GM12878 (cell line): ENCODE measurements at regions of chrX and their contacts with region 1.

Region 1: GRCh38 chrX:113001836-113002235 is 161.2 kb upstream of the AMOT start:
- DNase-seq: no peak
- ATAC-seq: no peak
- H3K4me3 ChIP-seq: no peak overlapping the region
- H3K27ac ChIP-seq: no peak overlapping the region
- H3K4me1 ChIP-seq: no peaks in the 10 kb centered on the region
- H3K27me3 ChIP-seq: no peaks in the 10 kb centered on the region
- CTCF ChIP-seq: peak in 1 of 3 experiments; percentile 18; a peak in 1 of 6 replicates
- EP300 ChIP-seq: no peak
- POLR2A ChIP-seq: no peak
- RAD21 ChIP-seq: peak; percentile 37; the same call in 1 of the 2 replicates

Region 2: GRCh38 chrX:112704187-112704586 is 297.6 kb before region 1 on chrX:
- CTCF ChIA-PET with region 1: no interaction called
- POLR2A ChIA-PET with region 1: no interaction called
- RAD21 ChIA-PET with region 1: no interaction called
- SMC1A ChIA-PET with region 1: no interaction called
- in situ Hi-C with region 1: no loop called
- intact Hi-C with region 1: no loop called
- DNase-seq: no peak
- ATAC-seq: no peak
- H3K4me3 ChIP-seq: no peak overlapping the region
- H3K27ac ChIP-seq: no peak overlapping the region
- H3K4me1 ChIP-seq: no peaks in the 10 kb centered on the region
- H3K27me3 ChIP-seq: no peaks in the 10 kb centered on the region
- CTCF ChIP-seq: no peak
- EP300 ChIP-seq: no peak
- POLR2A ChIP-seq: no peak
- RAD21 ChIP-seq: no peak

Region 3: GRCh38 chrX:112774651-112775293 is 227.1 kb before region 1 on chrX:
- CTCF ChIA-PET with region 1: no interaction called
- POLR2A ChIA-PET with region 1: no interaction called
- RAD21 ChIA-PET with region 1: no interaction called
- SMC1A ChIA-PET with region 1: no interaction called
- in situ Hi-C with region 1: no loop called
- intact Hi-C with region 1: loop called (anchors 10 kb)
- DNase-seq: no peak
- ATAC-seq: no peak
- H3K4me3 ChIP-seq: no peak overlapping the region
- H3K27ac ChIP-seq: no peak overlapping the region
- H3K4me1 ChIP-seq: no peaks in the 10 kb centered on the region
- H3K27me3 ChIP-seq: no peaks in the 10 kb centered on the region
- CTCF ChIP-seq: no peak
- EP300 ChIP-seq: no peak
- POLR2A ChIP-seq: no peak
- RAD21 ChIP-seq: no peak

Region 4: DNA sequence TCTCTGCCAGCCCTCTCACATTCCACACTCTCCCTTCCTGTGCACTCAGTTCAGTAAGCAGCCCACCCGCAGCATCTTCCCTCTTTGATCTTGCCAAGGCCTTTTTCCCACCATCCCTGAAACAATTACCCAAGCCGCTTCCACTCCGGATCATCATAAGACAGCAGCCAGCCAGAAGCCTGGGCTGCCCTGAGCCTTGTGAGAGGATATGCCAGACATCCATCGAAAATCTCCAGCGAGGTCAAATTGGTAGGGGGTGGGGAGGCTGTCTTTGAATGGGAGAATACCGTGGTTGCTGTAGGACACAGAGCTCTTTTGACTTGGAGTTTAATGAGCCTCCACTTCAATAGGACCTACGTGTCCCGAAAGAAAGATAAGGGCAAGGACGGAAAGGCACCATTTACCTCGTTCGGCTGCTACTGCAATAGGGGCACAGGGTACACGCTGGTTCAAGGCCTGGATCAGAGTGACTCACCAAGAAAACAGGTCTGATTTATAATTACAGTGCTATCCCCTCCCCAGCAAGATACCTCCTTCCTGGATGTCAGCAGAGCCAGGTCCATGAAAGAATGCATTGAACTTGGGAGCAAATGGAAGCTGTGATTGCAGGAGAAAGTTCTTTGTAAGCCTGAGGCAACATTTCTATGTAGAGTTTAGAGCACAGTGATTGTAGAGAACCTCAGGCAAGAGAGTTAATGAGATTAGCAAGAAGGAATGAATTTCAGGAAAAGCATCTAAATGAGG is 200.7 kb before region 1 on chrX:
- CTCF ChIA-PET with region 1: no interaction called
- POLR2A ChIA-PET with region 1: no interaction called
- RAD21 ChIA-PET with region 1: no interaction called
- SMC1A ChIA-PET with region 1: no interaction called
- in situ Hi-C with region 1: no loop called
- intact Hi-C with region 1: no loop called
- DNase-seq: no peak
- ATAC-seq: no peak
- H3K4me3 ChIP-seq: no peak overlapping the region
- H3K27ac ChIP-seq: no peak overlapping the region
- H3K4me1 ChIP-seq: no peaks in the 10 kb centered on the region
- H3K27me3 ChIP-seq: no peaks in the 10 kb centered on the region
- CTCF ChIP-seq: no peak
- EP300 ChIP-seq: no peak
- POLR2A ChIP-seq: no peak
- RAD21 ChIP-seq: no peak

Region 5: GRCh38 chrX:113019958-113020357 is 18.1 kb after region 1 on chrX:
- CTCF ChIA-PET with region 1: no interaction called
- POLR2A ChIA-PET with region 1: no interaction called
- RAD21 ChIA-PET with region 1: no interaction called
- SMC1A ChIA-PET with region 1: no interaction called
- in situ Hi-C with region 1: no loop called
- intact Hi-C with region 1: no loop called
- DNase-seq: no peak
- ATAC-seq: no peak
- H3K4me3 ChIP-seq: no peak overlapping the region
- H3K27ac ChIP-seq: no peak overlapping the region
- H3K4me1 ChIP-seq: no peaks in the 10 kb centered on the region
- H3K27me3 ChIP-seq: no peaks in the 10 kb centered on the region; a peak in 1 of 4 replicates
- CTCF ChIP-seq: no peak
- EP300 ChIP-seq: no peak
- POLR2A ChIP-seq: no peak
- RAD21 ChIP-seq: no peak

Region 6: GRCh38 chrX:113594104-113594903 is 592.5 kb after region 1 on chrX:
- CTCF ChIA-PET with region 1: no interaction called
- POLR2A ChIA-PET with region 1: no interaction called
- RAD21 ChIA-PET with region 1: no interaction called
- SMC1A ChIA-PET with region 1: no interaction called
- in situ Hi-C with region 1: no loop called
- intact Hi-C with region 1: no loop called
- DNase-seq: no peak
- ATAC-seq: no peak
- H3K4me3 ChIP-seq: no peak overlapping the region
- H3K27ac ChIP-seq: no peak overlapping the region
- H3K4me1 ChIP-seq: no peaks in the 10 kb centered on the region
- H3K27me3 ChIP-seq: no peaks in the 10 kb centered on the region
- CTCF ChIP-seq: no peak
- EP300 ChIP-seq: no peak
- POLR2A ChIP-seq: no peak
- RAD21 ChIP-seq: no peak